ENCODE measurements at regions of chr18 and their contacts with region 1.

Region 1: DNA sequence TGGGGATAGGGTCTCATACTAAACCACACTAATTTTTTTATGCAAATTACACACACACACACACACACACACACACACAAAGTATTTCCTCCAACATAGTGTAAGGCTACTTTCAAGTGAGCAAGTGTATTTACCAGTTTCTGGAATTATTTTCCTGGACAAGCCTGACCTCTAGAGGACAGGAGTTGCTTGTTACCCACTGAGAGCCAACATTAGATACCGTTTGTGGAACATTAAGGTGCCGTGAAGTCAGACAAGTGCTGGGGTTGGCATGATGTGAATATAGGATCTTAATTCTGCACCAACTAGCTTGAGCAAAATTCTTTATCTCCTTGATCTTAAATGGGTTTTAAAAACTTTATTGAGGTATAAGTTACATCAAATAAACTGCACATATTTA is 39.3 kb upstream of the SERPINB2 start:
- DNase-seq: peak; percentile 40

Region 2: DNA sequence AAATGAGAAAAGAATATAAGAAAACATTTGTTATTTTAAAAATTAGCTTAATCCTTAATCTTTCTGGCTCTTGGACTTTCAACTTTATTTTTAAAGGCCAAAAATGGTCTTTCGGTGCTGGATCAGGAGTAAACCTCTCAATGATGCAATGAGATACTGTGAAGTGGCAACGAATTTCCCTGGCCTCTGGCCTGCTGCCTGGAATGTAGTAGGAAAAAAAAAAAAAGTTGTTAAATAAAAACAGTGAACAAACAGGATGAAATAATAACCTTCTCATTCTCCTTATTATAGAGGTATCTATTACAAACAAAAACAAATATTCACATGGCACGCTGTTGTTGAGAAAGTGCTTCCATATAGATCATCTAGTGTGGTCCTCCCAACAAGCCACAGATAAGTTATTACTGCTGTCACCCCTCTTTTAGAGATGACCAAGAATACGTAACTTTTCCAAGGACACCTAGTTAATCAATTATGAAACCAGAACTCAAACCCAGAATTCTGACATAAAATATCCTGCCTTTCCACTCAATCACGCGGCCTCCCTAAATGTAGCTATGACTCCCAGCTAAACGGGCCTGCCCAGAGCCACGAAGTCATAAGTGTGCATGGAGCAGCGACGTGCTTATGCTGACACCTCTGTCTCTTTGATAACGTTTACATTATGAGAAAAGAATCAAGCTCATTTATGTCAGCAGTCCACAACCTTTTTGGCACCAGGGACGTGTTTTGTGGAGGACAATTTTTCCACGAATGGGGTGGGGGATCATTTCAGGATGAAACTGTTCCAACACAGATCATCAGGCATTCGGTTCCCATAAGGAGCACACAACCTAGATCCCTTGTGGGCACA is 699.5 kb before region 1 on chr18:
- in situ Hi-C with region 1: no loop called
- DNase-seq: no peak

Region 3: DNA sequence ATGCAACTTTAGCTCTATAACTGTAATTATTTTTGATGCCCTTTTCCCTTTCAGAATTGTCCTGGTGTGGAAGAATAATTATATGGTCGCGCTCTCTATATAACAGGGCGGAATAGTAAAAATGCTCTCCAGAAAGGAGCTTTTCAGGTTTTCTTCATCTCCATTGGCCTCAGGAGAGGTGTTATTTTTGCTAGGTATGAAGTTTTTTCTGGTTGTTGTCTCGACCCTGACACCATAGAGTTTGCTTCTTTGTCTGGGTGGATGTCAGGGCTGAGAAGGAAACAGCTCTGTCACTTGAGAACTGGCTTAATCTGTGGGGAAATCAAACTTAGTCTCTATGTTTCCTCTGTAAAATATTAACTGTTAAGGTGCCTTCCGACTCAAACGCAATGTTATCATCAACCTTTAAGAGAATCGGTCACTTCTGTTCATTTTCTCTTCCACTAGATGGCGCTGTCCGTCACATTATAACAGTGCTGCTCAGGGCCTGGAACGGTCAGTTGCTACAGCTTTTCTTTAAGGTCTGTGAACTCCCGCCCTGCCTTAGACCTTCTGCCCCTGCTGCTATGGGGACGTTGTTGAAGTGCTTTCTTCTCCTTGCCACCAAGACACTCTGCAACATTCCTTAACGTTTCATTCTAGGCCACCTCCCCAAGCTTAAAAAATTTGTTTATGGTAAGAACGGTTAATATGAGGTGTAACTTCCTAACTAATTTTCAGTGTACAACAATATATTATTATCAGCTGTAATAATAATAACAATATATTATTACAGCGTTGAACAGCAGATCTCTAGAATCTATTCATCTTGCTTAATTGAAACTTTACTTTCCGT is 329.8 kb before region 1 on chr18:
- in situ Hi-C with region 1: loop called (anchors 25 kb)
- DNase-seq: peak; percentile 67

Region 4: GRCh38 chr18:63758615-63759240 is 89.4 kb before region 1 on chr18:
- in situ Hi-C with region 1: no loop called
- DNase-seq: no peak